Endothelial cell of umbilical vein (primary cell): ENCODE measurements at regions of chr3 and their contacts with region 1.

Region 1: DNA sequence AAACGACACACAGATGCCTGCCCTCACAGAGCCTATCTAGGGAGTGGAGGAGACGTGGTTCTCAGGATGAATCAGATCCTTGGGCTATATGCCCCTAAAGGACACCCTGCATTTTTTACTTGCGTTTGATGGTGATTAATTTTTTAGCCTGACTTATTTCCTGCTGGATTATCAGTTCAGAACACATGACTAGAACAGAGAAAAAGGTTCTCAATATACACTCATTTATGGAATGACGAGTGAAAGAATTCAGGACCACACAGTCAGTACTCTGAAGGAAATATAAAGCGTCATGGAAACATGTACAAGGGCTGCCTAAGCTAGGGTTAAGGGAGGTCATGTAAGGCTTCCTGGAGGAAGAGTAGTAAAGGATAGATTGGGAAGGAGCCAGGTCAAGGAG is 121.8 kb downstream of the SSR3 start:
- DNase-seq: peak; percentile 92
- H3K4me3 ChIP-seq: no peak overlapping the region
- H3K27ac ChIP-seq: peak overlapping the region; percentile 48
- H3K4me1 ChIP-seq: peaks cover 25% of the 10 kb centered on the region
- H3K27me3 ChIP-seq: no peaks in the 10 kb centered on the region
- CTCF ChIP-seq: no peak
- POLR2A ChIP-seq: no peak

Region 2: GRCh38 chr3:155880286-155880685 is 552.9 kb before region 1 on chr3:
- CTCF ChIA-PET with region 1: no interaction called
- POLR2A ChIA-PET with region 1: no interaction called
- dilution Hi-C with region 1: no loop called
- intact Hi-C with region 1: no loop called
- DNase-seq: no peak
- H3K4me3 ChIP-seq: no peak overlapping the region
- H3K27ac ChIP-seq: no peak overlapping the region
- H3K4me1 ChIP-seq: no peaks in the 10 kb centered on the region
- H3K27me3 ChIP-seq: no peaks in the 10 kb centered on the region
- CTCF ChIP-seq: no peak
- POLR2A ChIP-seq: no peak

Region 3: DNA sequence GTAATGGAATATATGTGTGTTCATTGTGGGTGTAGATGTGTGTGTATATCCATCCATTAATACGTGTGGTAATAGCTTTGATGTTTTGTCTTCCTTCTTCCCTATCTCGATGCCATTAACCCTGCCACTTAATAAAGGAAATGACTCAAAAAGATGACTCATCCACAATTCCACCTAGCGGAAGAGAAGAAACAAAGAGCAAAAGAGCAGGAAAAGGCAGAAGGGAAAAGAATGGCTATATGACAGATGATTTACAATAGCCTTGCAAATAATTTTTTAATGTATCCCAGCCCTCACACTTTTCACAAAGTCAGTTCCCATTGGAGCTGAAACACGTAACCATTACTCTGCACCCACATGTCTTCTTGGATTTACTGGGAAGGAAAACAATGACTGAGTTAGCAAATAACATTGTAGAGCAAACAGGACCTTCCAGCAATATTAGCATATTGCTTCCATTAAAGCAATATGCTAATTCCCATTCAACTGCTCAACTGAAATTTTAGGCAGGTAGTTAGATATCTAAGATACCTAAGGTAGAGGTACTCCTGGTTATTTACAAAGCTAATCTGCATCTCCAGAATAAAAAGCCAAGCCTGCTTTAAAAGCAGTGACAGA is 115.6 kb before region 1 on chr3:
- CTCF ChIA-PET with region 1: no interaction called
- POLR2A ChIA-PET with region 1: no interaction called
- dilution Hi-C with region 1: no loop called
- intact Hi-C with region 1: loop called (anchors 5 kb)
- DNase-seq: peak; percentile 96
- H3K4me3 ChIP-seq: no peak overlapping the region
- H3K27ac ChIP-seq: peak overlapping the region; percentile 72
- H3K4me1 ChIP-seq: peaks cover 24% of the 10 kb centered on the region
- H3K27me3 ChIP-seq: no peaks in the 10 kb centered on the region
- CTCF ChIP-seq: no peak
- POLR2A ChIP-seq: no peak

Region 4: GRCh38 chr3:156400062-156400461 is 33.1 kb before region 1 on chr3:
- CTCF ChIA-PET with region 1: no interaction called
- POLR2A ChIA-PET with region 1: no interaction called
- dilution Hi-C with region 1: no loop called
- intact Hi-C with region 1: no loop called
- DNase-seq: no peak
- H3K4me3 ChIP-seq: no peak overlapping the region
- H3K27ac ChIP-seq: no peak overlapping the region
- H3K4me1 ChIP-seq: no peaks in the 10 kb centered on the region
- H3K27me3 ChIP-seq: no peaks in the 10 kb centered on the region
- CTCF ChIP-seq: no peak
- POLR2A ChIP-seq: no peak

Region 5: GRCh38 chr3:156416846-156417558 is 16.1 kb before region 1 on chr3:
- CTCF ChIA-PET with region 1: interaction called, 10 read pairs
- POLR2A ChIA-PET with region 1: no interaction called
- dilution Hi-C with region 1: no loop called
- intact Hi-C with region 1: no loop called
- DNase-seq: no peak
- H3K4me3 ChIP-seq: no peak overlapping the region
- H3K27ac ChIP-seq: no peak overlapping the region
- H3K4me1 ChIP-seq: no peaks in the 10 kb centered on the region
- H3K27me3 ChIP-seq: no peaks in the 10 kb centered on the region
- CTCF ChIP-seq: no peak
- POLR2A ChIP-seq: no peak